ENCODE measurements at regions of chr6 and their contacts with region 1.

Region 1: GRCh38 chr6:157075549-157076450 is 247.5 kb downstream of the TMEM242 start:
- DNase-seq: peak; percentile 69
- H3K4me3 Mint-ChIP-seq: peak overlapping the region; percentile 77
- H3K27ac Mint-ChIP-seq: peak overlapping the region; percentile 98
- H3K4me1 Mint-ChIP-seq: peaks cover 36% of the 10 kb centered on the region
- H3K27me3 Mint-ChIP-seq: no peaks in the 10 kb centered on the region

Region 2: DNA sequence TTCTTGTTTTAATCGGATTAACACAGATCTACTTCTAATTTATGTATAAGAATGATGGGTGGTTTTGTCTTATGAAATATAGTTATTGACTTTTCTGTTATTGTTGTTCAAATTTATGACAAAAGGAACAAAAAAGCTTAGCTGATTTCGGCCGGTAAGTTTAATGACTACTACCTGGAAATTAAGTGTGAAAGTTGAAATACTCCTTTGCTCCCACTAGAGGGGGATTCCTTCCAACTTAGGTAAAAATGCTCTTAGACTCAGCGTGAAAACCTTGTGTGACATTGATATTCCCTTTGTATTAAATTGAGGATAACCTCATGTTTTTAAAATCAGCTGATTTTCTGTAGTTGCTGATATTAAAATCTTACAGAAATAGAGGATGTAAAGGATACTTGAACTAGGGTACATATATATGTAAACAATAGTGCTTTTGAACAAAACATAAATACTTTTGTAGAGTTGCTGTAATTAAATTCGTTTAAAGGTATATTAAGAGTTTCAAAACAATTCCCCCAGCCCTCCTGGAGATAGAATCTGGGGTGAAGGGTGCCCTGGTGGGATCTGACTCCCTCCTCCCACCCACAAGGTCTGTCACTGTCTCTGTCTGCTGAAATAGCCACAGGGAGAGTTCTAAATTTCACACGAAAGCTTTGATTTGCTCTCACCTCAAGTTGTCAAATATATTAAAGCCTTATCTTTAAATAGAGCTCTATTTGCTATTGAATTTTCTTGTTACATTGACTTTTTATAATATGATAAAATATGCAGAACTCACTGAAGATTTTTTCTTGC is 41.2 kb before region 1 on chr6:
- intact Hi-C with region 1: no loop called
- DNase-seq: no peak
- H3K4me3 Mint-ChIP-seq: peak overlapping the region; percentile 72
- H3K27ac Mint-ChIP-seq: no peak overlapping the region
- H3K4me1 Mint-ChIP-seq: peaks cover 14% of the 10 kb centered on the region
- H3K27me3 Mint-ChIP-seq: no peaks in the 10 kb centered on the region

Region 3: DNA sequence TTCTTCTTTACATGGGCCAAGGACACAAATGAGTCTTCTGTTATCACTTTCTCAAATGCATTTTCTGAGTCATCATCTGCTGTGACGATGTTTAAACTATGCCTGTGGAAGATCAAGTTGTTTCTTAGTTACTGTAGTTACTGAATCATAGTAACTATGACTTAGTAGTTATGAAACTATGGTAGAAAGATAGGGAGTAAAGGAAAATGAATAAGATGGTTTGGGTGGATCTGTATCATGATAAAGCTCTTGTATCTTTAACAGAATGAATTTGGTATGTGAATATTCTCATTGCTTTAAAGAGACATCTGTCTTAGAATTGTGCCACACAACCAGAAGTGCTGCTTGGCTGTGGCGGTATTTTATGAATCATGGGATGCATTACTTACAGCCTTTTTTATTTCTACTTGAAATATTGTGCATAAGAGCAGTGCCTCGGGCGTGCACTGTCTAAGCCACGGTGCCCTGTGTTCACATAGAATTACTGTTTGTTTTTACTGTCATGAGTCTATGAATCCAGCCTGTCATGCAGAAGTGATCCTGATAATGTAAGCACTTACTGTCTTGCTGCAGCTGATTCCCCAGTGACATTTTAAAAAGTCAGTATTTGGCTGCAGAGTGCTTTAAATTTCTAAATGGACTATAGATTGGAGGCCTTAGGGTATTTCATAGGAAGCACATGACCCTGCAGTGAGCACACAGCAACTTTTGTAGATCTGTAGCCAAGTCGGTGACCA is 32.3 kb after region 1 on chr6:
- intact Hi-C with region 1: loop called (anchors 1 kb)
- DNase-seq: no peak
- H3K4me3 Mint-ChIP-seq: no peak overlapping the region
- H3K27ac Mint-ChIP-seq: peak overlapping the region; percentile 78
- H3K4me1 Mint-ChIP-seq: peaks cover 30% of the 10 kb centered on the region
- H3K27me3 Mint-ChIP-seq: no peaks in the 10 kb centered on the region